ENCODE measurements at regions of chrX and their contacts with region 1.

Region 1: GRCh38 chrX:109475174-109475891 is 6.6 kb downstream of the GUCY2F start:
- DNase-seq: peak; percentile 31
- H3K4me3 ChIP-seq: peak overlapping the region; percentile 6 to 39; a peak in 2 of 4 replicates
- H3K27ac ChIP-seq: no peak overlapping the region
- H3K4me1 ChIP-seq: peaks cover 0 to 3% of the 10 kb centered on the region in 2 experiments; a peak in 1 of 4 replicates
- H3K27me3 ChIP-seq: peaks cover 35% of the 10 kb centered on the region; the same call in 1 of the 2 replicates
- CTCF ChIP-seq: peak; percentile 69
- EP300 ChIP-seq: no peak
- RAD21 ChIP-seq: peak; percentile 31; the same call in 1 of the 2 replicates

Region 2: GRCh38 chrX:108699368-108699767 is 776.0 kb before region 1 on chrX:
- CTCF ChIA-PET with region 1: interaction called, 10 read pairs
- POLR2A ChIA-PET with region 1: no interaction called
- DNase-seq: peak; percentile 16
- H3K4me3 ChIP-seq: no peak overlapping the region
- H3K27ac ChIP-seq: no peak overlapping the region
- H3K4me1 ChIP-seq: no peaks in the 10 kb centered on the region
- H3K27me3 ChIP-seq: peaks cover 19% of the 10 kb centered on the region; the same call in 1 of the 2 replicates
- CTCF ChIP-seq: peak; percentile 61
- EP300 ChIP-seq: no peak
- RAD21 ChIP-seq: peak; percentile 64

Region 3: GRCh38 chrX:109448282-109448938 is 26.9 kb before region 1 on chrX:
- CTCF ChIA-PET with region 1: interaction called, 10 read pairs
- POLR2A ChIA-PET with region 1: no interaction called
- DNase-seq: no peak
- H3K4me3 ChIP-seq: no peak overlapping the region
- H3K27ac ChIP-seq: no peak overlapping the region
- H3K4me1 ChIP-seq: no peaks in the 10 kb centered on the region
- H3K27me3 ChIP-seq: peaks cover 13% of the 10 kb centered on the region; the same call in 1 of the 2 replicates
- CTCF ChIP-seq: no peak
- EP300 ChIP-seq: no peak
- RAD21 ChIP-seq: no peak

Region 4: DNA sequence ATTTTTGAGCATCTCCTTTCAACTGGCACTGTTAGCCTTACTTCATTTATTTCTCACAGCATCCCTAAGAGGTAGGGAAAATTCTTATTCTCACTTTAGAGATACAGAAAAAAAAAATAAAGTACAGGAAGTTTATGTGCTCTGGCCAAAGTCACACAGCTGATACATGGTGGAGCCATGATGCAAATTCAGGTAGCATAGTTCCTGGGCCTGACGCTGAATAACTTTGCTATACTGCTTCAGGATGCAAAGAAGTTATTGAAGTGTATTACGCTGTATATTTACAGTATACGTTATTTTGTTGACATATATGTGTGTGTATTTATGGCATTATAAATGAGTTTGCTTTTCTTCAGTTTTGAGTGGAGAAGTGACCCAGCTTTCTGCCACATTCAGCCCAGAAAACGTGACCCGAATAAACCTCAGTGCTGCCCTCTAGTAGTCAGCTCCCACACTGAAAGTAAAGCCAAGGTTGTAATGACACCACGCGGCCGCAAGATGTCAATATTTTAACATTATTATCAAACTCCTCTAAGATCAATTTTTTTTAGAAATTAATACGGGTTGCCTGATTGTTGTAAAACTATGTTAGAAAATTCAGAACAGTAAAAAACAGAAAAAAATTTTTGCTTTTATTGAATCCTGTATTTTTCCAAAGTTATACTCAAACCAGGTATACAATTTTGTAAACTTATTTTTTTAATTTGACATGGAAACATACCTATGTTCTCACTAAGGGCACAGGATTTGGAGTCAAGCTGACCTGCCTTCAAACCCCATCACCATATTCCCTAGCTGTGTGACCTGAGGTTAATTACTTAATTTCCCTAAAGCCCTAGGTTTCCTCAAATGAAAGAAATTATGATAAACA is 10.4 kb after region 1 on chrX:
- CTCF ChIA-PET with region 1: interaction called, 68 read pairs
- POLR2A ChIA-PET with region 1: no interaction called
- DNase-seq: peak; percentile 38
- H3K4me3 ChIP-seq: no peak overlapping the region; a peak in 1 of 4 replicates
- H3K27ac ChIP-seq: no peak overlapping the region
- H3K4me1 ChIP-seq: no peaks in the 10 kb centered on the region
- H3K27me3 ChIP-seq: peaks cover 11% of the 10 kb centered on the region; the same call in 1 of the 2 replicates
- CTCF ChIP-seq: peak; percentile 99
- EP300 ChIP-seq: no peak
- RAD21 ChIP-seq: peak; percentile 81

Measured in SK-N-SH (cell line).